T-cell (primary cell): ENCODE measurements at regions of chr11 and their contacts with region 1.

Region 1: DNA sequence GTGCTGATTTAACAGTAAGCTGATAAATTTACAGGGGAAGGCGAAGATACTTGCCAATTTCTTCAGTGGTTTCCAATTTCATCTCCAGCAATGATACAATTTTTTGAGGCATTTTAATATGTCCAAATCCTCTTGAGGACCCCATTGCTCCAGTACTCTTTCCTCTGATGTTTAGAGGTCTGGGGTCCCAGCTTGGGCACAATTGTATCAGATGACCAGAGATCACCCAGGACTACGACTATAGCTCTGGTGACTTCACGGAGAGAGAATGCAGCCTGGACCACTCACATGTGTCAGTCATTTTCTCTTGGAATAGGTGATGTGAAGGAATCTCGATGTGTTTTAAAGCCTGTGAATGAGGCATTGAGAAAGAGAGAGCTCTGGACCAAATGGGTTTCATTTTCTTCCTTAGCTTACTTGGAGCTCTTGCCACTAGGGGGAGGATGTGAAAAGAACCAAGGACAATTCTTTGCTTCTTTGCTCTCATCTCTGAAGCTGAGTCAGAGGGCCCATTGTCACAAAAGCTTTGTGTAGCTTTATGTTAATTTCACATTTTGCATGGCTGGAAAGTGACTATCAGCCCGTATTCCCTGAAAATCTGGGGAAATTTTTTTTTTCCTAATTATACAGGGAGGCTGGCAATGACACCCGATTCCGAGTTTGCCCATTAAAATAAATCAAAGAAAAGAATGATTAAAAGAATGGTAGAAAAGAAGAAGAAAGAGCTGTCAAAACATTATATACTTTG is 6.7 kb upstream of the CCDC90B start:
- DNase-seq: peak in 10 of 35 experiments; percentile 4 to 64 (median 16)
- ATAC-seq: peak; percentile 77 to 80 (median 78)
- H3K4me3 ChIP-seq: no peak overlapping the region
- H3K4me3 Mint-ChIP-seq: peak overlapping the region in 2 of 3 donors; percentile 16 to 28
- H3K27ac ChIP-seq: no peak overlapping the region
- H3K27ac Mint-ChIP-seq: peak overlapping the region in 1 of 2 donors; percentile 34
- H3K4me1 ChIP-seq: peaks cover 0 to 2% of the 10 kb centered on the region in 2 experiments
- H3K4me1 Mint-ChIP-seq: peaks cover 4 to 8% (median 4%) of the 10 kb centered on the region in 3 donors
- H3K27me3 ChIP-seq: no peaks in the 10 kb centered on the region
- H3K27me3 Mint-ChIP-seq: peaks cover 0 to 11% of the 10 kb centered on the region in 2 donors

Region 2: DNA sequence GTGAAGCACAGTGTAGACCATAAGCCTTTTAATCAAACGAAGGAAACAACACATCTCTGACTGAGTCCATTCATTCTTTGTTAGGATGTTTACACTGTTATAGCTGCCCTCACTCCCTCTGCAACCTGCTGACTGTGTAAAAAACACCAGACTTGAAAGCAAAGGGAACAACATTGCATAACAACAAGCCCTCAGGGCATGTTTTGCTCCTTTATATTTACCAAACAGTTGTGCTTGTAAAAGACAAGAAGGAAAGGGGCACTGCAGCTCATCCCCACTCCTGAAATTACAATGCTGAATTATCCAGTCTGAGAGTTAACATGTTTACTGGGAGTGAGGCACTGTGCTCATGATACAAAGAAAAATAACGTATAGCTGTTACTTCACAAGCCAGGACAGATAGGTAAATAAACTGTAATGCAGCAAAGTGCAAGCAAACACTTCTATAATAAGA is 267.6 kb before region 1 on chr11:
- CTCF ChIA-PET with region 1: no interaction called
- POLR2A ChIA-PET with region 1: no interaction called
- DNase-seq: no peak
- ATAC-seq: no peak
- H3K4me3 ChIP-seq: no peak overlapping the region
- H3K4me3 Mint-ChIP-seq: no peak overlapping the region
- H3K27ac ChIP-seq: no peak overlapping the region
- H3K27ac Mint-ChIP-seq: no peak overlapping the region
- H3K4me1 ChIP-seq: peaks cover 3 to 16% of the 10 kb centered on the region in 2 experiments
- H3K4me1 Mint-ChIP-seq: peaks cover 35 to 45% (median 41%) of the 10 kb centered on the region in 3 donors
- H3K27me3 ChIP-seq: no peaks in the 10 kb centered on the region
- H3K27me3 Mint-ChIP-seq: no peaks in the 10 kb centered on the region

Region 3: DNA sequence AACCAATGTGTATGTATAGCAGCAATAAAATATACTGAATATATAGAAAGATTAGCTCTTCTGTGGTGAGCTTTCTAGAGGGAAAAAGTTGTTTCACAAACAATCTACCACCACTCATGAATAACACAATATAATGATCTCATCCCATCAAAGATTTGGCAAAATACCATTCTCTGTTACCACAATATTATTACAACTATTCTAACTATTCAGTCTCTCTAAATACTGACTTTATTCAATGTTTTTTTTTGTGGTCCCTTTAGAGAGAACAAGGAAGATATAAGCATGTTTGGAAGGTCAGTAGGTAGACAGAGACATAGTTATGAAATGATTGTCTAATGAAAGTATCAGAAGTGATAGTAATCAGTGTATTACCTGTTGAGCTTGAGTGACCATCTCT is 14.5 kb before region 1 on chr11:
- CTCF ChIA-PET with region 1: interaction called, 3 to 12 read pairs
- POLR2A ChIA-PET with region 1: interaction called in 1 of 2 experiments, 4 read pairs
- DNase-seq: no peak
- ATAC-seq: no peak
- H3K4me3 ChIP-seq: no peak overlapping the region
- H3K4me3 Mint-ChIP-seq: no peak overlapping the region
- H3K27ac ChIP-seq: no peak overlapping the region
- H3K27ac Mint-ChIP-seq: no peak overlapping the region
- H3K4me1 ChIP-seq: no peaks in the 10 kb centered on the region
- H3K4me1 Mint-ChIP-seq: peaks cover 28 to 37% (median 30%) of the 10 kb centered on the region in 3 donors
- H3K27me3 ChIP-seq: no peaks in the 10 kb centered on the region
- H3K27me3 Mint-ChIP-seq: no peaks in the 10 kb centered on the region

Region 4: DNA sequence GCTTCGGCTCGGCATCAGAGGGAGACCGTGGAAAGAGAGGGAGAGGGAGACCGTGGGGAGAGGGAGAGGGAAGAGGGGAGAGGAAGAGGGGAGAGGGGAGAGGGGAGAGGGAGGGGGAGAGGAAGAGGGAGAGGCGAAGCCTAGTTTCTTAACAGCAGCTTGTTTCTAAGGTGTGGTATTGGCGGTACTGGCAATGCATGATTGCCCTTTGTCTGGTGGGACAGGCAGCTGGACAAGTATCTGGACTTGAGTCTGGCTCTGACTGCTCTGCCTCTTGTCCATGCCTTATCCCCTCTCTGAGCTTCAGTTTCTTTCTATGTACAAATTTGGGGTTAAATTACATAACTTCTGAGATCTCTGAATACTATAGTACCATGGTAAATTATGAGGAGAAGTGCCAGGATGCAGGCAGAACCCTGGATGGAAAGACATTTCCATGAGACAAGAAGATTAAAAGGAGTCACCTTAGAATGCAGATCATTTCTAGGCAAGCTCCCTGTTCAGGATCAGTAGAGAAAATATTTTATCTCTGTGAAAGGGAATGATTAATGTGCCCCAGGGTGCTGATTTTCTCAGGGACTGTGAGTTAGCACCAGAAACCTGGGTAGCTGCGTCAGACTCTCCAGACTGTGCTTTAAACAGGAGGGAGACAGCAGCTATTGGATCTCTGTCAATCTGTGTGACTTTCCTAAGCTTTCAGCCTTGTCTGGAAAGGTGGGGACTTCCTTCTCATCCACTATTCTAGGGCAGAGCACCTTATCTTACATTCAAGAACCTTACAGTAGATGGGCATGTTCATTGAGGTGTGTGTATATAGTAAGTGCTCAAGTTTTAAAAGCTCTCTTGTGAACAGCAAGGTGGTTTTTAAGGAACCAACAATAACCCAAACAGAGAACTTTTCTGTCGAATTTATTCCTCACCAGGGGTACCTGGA is 25.1 kb after region 1 on chr11:
- CTCF ChIA-PET with region 1: no interaction called
- POLR2A ChIA-PET with region 1: no interaction called
- DNase-seq: no peak
- ATAC-seq: no peak
- H3K4me3 ChIP-seq: no peak overlapping the region
- H3K4me3 Mint-ChIP-seq: no peak overlapping the region
- H3K27ac ChIP-seq: no peak overlapping the region
- H3K27ac Mint-ChIP-seq: no peak overlapping the region
- H3K4me1 ChIP-seq: no peaks in the 10 kb centered on the region
- H3K4me1 Mint-ChIP-seq: no peaks in the 10 kb centered on the region
- H3K27me3 ChIP-seq: no peaks in the 10 kb centered on the region
- H3K27me3 Mint-ChIP-seq: peaks cover 2 to 19% of the 10 kb centered on the region in 2 donors